CD8-positive, alpha-beta T cell (primary cell): ENCODE measurements at regions of chr9 and their contacts with region 1.

Region 1: GRCh38 chr9:78097541-78097940 is 65.9 kb upstream of the GNAQ start:
- DNase-seq: peak in 1 of 9 experiments; percentile 15
- ATAC-seq: no peak
- H3K4me3 ChIP-seq: no peak overlapping the region
- H3K4me3 Mint-ChIP-seq: no peak overlapping the region
- H3K27ac ChIP-seq: no peak overlapping the region
- H3K27ac Mint-ChIP-seq: no peak overlapping the region
- H3K4me1 ChIP-seq: peaks cover 4% of the 10 kb centered on the region
- H3K4me1 Mint-ChIP-seq: peaks cover 14% of the 10 kb centered on the region
- H3K27me3 ChIP-seq: no peaks in the 10 kb centered on the region
- H3K27me3 Mint-ChIP-seq: no peaks in the 10 kb centered on the region
- CTCF ChIP-seq: no peak

Region 2: DNA sequence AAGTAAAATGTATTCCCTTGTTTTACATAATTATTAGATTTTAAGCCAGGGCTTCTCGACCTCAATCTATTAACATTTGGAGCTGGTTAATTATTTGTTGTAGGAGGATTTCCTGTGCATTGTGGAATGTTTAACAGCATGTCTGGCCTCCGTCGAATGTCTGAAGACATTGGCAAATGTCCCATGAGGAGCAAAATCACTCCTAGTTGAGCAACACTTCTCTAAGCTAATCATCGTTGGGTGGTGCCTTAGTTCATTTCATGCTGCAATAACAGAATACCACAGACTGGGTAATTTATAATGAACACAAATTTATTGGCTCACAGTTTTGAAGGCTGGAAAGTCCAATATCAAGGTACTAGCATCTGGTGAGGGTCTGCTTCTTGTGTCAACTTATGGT is 933.7 kb before region 1 on chr9:
- CTCF ChIA-PET with region 1: no interaction called
- POLR2A ChIA-PET with region 1: no interaction called
- intact Hi-C with region 1: no loop called
- DNase-seq: no peak
- ATAC-seq: no peak
- H3K4me3 ChIP-seq: no peak overlapping the region
- H3K4me3 Mint-ChIP-seq: no peak overlapping the region
- H3K27ac ChIP-seq: no peak overlapping the region
- H3K27ac Mint-ChIP-seq: no peak overlapping the region
- H3K4me1 ChIP-seq: no peaks in the 10 kb centered on the region
- H3K4me1 Mint-ChIP-seq: peaks cover 1% of the 10 kb centered on the region
- H3K27me3 ChIP-seq: peaks cover 0 to 3% of the 10 kb centered on the region in 2 experiments
- H3K27me3 Mint-ChIP-seq: peaks cover 8% of the 10 kb centered on the region
- CTCF ChIP-seq: no peak

Region 3: DNA sequence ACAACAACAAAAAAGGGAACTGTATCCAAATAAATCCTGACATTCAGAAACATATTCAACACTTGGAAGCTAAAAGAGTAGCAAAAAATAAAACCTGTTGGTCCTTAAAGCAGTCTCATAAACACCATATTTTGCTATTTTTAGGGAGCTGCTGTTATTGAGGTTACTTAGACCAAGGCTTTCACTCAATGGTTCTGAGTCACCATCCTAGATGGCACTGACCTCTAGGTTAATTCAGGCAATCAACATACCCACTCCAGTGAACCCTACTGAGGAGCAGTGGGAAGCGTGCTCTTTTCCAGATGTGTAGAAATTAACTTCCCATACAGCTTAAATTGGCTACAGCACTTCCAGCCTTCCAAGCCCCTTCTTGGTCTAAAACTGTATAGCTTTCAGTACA is 71.1 kb before region 1 on chr9:
- CTCF ChIA-PET with region 1: no interaction called
- POLR2A ChIA-PET with region 1: no interaction called
- intact Hi-C with region 1: no loop called
- DNase-seq: no peak
- ATAC-seq: no peak
- H3K4me3 ChIP-seq: no peak overlapping the region
- H3K4me3 Mint-ChIP-seq: no peak overlapping the region
- H3K27ac ChIP-seq: no peak overlapping the region
- H3K27ac Mint-ChIP-seq: no peak overlapping the region
- H3K4me1 ChIP-seq: peaks cover 34% of the 10 kb centered on the region
- H3K4me1 Mint-ChIP-seq: peaks cover 57% of the 10 kb centered on the region
- H3K27me3 ChIP-seq: no peaks in the 10 kb centered on the region
- H3K27me3 Mint-ChIP-seq: no peaks in the 10 kb centered on the region
- CTCF ChIP-seq: no peak

Region 4: DNA sequence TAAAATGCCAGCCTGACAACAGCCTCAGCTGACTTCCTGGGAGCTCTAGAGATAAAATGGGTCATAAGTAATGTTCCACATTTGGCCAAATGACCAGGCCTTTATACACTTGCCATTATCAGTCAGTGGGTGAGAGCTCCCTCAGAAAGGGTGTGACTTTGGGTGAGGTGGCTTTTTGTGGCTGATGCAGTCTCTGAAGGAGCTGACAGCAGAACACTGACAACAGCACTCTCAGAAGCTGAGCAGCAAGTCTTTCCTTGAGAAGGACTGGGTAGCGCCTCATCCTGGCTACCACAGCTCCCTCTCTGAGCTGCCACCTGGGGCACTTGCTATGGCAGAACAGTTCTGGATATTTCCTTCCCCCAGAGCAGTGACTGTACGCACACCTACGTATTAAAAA is 43.9 kb before region 1 on chr9:
- CTCF ChIA-PET with region 1: no interaction called
- POLR2A ChIA-PET with region 1: interaction called, 3 read pairs
- intact Hi-C with region 1: loop called in 1 of 2 experiments (anchors 5 kb)
- DNase-seq: no peak
- ATAC-seq: no peak
- H3K4me3 ChIP-seq: no peak overlapping the region
- H3K4me3 Mint-ChIP-seq: no peak overlapping the region
- H3K27ac ChIP-seq: no peak overlapping the region
- H3K27ac Mint-ChIP-seq: no peak overlapping the region
- H3K4me1 ChIP-seq: peaks cover 16% of the 10 kb centered on the region
- H3K4me1 Mint-ChIP-seq: peaks cover 20% of the 10 kb centered on the region
- H3K27me3 ChIP-seq: no peaks in the 10 kb centered on the region
- H3K27me3 Mint-ChIP-seq: no peaks in the 10 kb centered on the region
- CTCF ChIP-seq: no peak

Region 5: DNA sequence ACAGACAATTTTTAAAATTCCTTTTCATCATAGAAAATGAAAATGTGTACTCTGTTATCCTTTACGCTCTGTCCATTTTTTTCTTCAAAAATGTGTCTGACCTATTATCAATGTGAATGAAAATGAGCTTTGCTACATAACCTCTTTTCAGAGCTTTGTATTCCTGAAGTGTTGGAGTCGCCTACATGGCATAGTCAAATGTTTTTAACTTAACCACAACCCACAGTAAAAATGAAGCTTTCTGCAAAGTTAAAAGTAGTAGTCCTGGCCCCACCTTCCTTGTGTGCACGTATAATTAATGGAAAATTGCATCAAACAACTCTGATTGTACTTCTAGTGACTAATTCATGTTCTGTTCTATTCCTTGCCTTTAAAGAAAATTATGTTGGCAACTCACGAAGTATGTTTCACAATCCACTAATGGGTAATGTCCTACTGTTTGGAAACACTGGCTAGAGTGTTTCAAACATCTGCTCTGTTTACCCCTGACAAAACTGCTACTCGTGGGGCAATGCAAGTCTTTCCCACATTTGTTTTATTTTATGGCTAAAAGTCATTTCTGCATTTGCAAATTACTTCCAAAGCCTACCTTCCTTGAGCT is 180.7 kb after region 1 on chr9:
- CTCF ChIA-PET with region 1: no interaction called
- POLR2A ChIA-PET with region 1: no interaction called
- intact Hi-C with region 1: no loop called
- DNase-seq: no peak
- ATAC-seq: no peak
- H3K4me3 ChIP-seq: no peak overlapping the region
- H3K4me3 Mint-ChIP-seq: no peak overlapping the region
- H3K27ac ChIP-seq: no peak overlapping the region
- H3K27ac Mint-ChIP-seq: peak overlapping the region; percentile 11
- H3K4me1 ChIP-seq: no peaks in the 10 kb centered on the region
- H3K4me1 Mint-ChIP-seq: peaks cover 9% of the 10 kb centered on the region
- H3K27me3 ChIP-seq: no peaks in the 10 kb centered on the region
- H3K27me3 Mint-ChIP-seq: no peaks in the 10 kb centered on the region
- CTCF ChIP-seq: no peak